Heart left ventricle (tissue), 16 donors: ENCODE measurements at regions of chr12 and their contacts with region 1.

Region 1: DNA sequence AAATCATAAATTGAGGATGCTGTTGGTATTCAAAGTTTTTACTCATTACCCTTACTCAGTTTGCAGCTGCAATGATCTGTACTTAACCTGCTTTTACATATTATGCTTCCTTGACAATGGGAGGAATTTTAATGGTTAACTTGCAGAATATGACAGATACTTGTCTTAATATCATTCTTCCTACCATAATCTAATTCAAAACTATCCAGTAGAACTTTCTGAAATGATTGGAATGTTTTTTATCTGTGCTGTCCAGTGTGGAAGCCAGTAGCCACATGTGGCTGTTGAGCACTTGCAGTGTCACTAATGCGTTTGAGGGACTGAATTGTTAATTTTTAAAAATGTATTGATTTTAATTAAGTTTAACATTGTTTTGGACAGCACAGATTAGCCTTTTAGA is 23.5 kb downstream of the FGFR1OP2 start:
- DNase-seq: no peak
- ATAC-seq: no peak
- H3K4me3 ChIP-seq: no peak overlapping the region
- H3K27ac ChIP-seq: no peak overlapping the region
- H3K4me1 ChIP-seq: peaks cover 0 to 6% (median 0%) of the 10 kb centered on the region in 12 donors
- H3K27me3 ChIP-seq: no peaks in the 10 kb centered on the region
- CTCF ChIP-seq: no peak
- POLR2A ChIP-seq: no peak

Region 2: DNA sequence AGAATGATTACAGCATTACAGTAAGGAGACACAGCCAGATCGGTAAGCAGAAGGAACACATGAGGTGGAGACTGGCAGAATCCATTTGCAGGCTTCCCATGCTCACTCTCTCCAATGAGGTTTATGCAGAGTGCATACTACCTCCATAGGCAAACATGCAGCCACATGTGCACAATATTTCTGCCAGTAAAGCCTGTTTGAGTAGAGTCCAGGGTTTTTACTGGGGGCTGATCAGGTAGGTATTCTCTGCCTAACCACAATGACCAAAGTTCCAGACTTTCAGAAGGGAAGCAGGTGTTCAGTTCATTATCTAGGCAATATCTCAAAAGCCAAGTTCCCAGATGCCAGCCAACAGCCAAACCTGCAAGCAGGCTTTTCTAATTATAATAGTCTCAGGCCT is 55.1 kb before region 1 on chr12:
- intact Hi-C with region 1: no loop called
- DNase-seq: no peak
- ATAC-seq: no peak
- H3K4me3 ChIP-seq: no peak overlapping the region
- H3K27ac ChIP-seq: no peak overlapping the region
- H3K4me1 ChIP-seq: peaks cover 0 to 7% (median 0%) of the 10 kb centered on the region in 12 donors
- H3K27me3 ChIP-seq: no peaks in the 10 kb centered on the region
- CTCF ChIP-seq: no peak
- POLR2A ChIP-seq: no peak

Region 3: GRCh38 chr12:26935636-26936378 is 26.0 kb before region 1 on chr12:
- intact Hi-C with region 1: no loop called
- DNase-seq: no peak
- ATAC-seq: no peak
- H3K4me3 ChIP-seq: peak overlapping the region in 1 of 12 donors; percentile 73
- H3K27ac ChIP-seq: peak overlapping the region in 2 of 12 donors; percentile 9 to 25
- H3K4me1 ChIP-seq: peaks cover 0 to 49% (median 29%) of the 10 kb centered on the region in 12 donors
- H3K27me3 ChIP-seq: no peaks in the 10 kb centered on the region
- CTCF ChIP-seq: no peak
- POLR2A ChIP-seq: no peak

Region 4: GRCh38 chr12:26995706-26996105 is 33.9 kb after region 1 on chr12:
- intact Hi-C with region 1: loop called in 1 of 10 experiments (anchors 2 kb)
- DNase-seq: no peak
- ATAC-seq: no peak
- H3K4me3 ChIP-seq: no peak overlapping the region
- H3K27ac ChIP-seq: no peak overlapping the region
- H3K4me1 ChIP-seq: peaks cover 0 to 14% (median 0%) of the 10 kb centered on the region in 12 donors
- H3K27me3 ChIP-seq: no peaks in the 10 kb centered on the region
- CTCF ChIP-seq: no peak
- POLR2A ChIP-seq: no peak